Endothelial cell of umbilical vein (primary cell): ENCODE measurements at regions of chr7 and their contacts with region 1.

Region 1: DNA sequence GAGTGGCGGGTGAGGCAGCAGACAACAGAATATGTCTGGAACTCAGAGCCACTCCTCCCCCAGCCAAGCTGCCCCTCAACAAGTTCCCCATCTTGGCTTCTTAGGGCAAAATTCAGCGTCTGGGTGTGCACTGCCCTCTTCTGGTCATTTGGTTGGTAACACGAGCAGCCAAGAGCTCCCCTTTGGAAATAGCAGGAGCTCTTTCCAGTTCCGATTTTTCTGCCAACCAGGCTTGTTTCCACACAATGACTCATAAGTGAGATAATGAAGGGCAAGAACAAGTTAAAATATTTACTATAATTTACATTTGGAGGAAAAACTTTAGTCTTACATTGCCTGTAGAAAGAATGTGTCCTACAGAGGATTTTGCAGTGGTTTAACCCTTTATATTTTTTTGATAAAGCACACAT is 70.5 kb downstream of the ADCYAP1R1 start:
- DNase-seq: peak; percentile 88
- H3K4me3 ChIP-seq: no peak overlapping the region
- H3K27ac ChIP-seq: no peak overlapping the region
- H3K4me1 ChIP-seq: no peaks in the 10 kb centered on the region
- H3K27me3 ChIP-seq: peaks cover 0 to 14% of the 10 kb centered on the region in 2 experiments
- CTCF ChIP-seq: peak; percentile 81 to 85
- POLR2A ChIP-seq: no peak

Region 2: GRCh38 chr7:30740424-30741181 is 382.1 kb before region 1 on chr7:
- CTCF ChIA-PET with region 1: interaction called, 21 read pairs
- POLR2A ChIA-PET with region 1: no interaction called
- dilution Hi-C with region 1: no loop called
- intact Hi-C with region 1: loop called (anchors 5 kb)
- DNase-seq: peak; percentile 58
- H3K4me3 ChIP-seq: no peak overlapping the region
- H3K27ac ChIP-seq: no peak overlapping the region
- H3K4me1 ChIP-seq: no peaks in the 10 kb centered on the region
- H3K27me3 ChIP-seq: peaks cover 3 to 4% of the 10 kb centered on the region in 2 experiments
- CTCF ChIP-seq: peak; percentile 94 to 98
- POLR2A ChIP-seq: no peak

Region 3: GRCh38 chr7:30938435-30939316 is 184.0 kb before region 1 on chr7:
- CTCF ChIA-PET with region 1: interaction called, 48 read pairs
- POLR2A ChIA-PET with region 1: no interaction called
- dilution Hi-C with region 1: no loop called
- intact Hi-C with region 1: loop called (anchors 1 kb)
- DNase-seq: peak; percentile 78
- H3K4me3 ChIP-seq: no peak overlapping the region
- H3K27ac ChIP-seq: no peak overlapping the region
- H3K4me1 ChIP-seq: no peaks in the 10 kb centered on the region
- H3K27me3 ChIP-seq: peaks cover 14 to 45% of the 10 kb centered on the region in 2 experiments
- CTCF ChIP-seq: peak; percentile 94 to 96
- POLR2A ChIP-seq: no peak

Region 4: GRCh38 chr7:30996256-30996655 is 126.4 kb before region 1 on chr7:
- CTCF ChIA-PET with region 1: interaction called, 1,079 read pairs
- POLR2A ChIA-PET with region 1: no interaction called
- dilution Hi-C with region 1: no loop called
- intact Hi-C with region 1: no loop called
- DNase-seq: no peak
- H3K4me3 ChIP-seq: no peak overlapping the region
- H3K27ac ChIP-seq: no peak overlapping the region
- H3K4me1 ChIP-seq: no peaks in the 10 kb centered on the region
- H3K27me3 ChIP-seq: no peaks in the 10 kb centered on the region
- CTCF ChIP-seq: no peak
- POLR2A ChIP-seq: no peak

Region 5: DNA sequence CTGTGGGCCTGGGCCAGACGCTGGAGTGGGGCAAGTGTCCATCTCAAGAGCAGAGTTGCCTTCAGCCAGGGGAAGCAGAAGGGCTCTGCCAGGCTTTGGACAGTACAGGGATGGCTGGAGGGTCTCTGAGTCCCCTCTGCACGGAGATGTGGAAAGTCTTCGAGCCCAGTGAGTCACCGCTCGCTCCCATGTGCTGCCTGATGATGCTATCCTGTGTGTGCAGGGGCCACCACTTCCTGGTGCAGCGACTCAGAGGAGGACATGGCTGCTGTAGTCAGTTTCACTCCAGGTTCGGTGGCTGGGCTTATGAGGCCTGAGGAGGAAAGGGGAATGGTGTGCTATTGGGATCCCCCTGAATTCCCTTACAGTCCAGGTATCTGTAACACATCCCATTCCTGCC is 64.5 kb before region 1 on chr7:
- CTCF ChIA-PET with region 1: interaction called, 73 read pairs
- POLR2A ChIA-PET with region 1: no interaction called
- dilution Hi-C with region 1: no loop called
- intact Hi-C with region 1: loop called (anchors 1 kb)
- DNase-seq: no peak
- H3K4me3 ChIP-seq: no peak overlapping the region
- H3K27ac ChIP-seq: no peak overlapping the region
- H3K4me1 ChIP-seq: no peaks in the 10 kb centered on the region
- H3K27me3 ChIP-seq: peaks cover 11 to 13% of the 10 kb centered on the region in 2 experiments
- CTCF ChIP-seq: no peak
- POLR2A ChIP-seq: no peak

Region 6: DNA sequence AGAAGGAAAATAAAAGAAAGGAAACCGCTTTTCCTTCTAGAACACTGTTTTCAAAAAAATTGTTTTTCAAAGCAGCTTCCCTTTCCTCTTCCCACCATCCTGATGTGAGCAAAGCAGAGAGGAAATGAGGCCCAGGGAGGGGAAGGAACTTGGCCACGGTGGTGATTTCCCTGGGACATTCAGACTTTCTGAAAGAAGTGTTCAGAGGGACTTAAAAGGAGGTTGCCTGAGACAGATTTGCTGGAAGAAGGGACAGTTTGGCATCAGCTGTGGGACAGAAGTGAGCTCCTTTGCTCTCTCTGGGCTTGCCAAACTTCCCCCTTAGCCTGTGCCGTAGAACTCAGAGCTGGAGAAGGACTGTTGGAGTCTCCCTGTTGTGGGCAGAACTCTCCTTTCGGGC is 40.2 kb before region 1 on chr7:
- CTCF ChIA-PET with region 1: interaction called, 11 read pairs
- POLR2A ChIA-PET with region 1: no interaction called
- dilution Hi-C with region 1: no loop called
- intact Hi-C with region 1: no loop called
- DNase-seq: peak; percentile 28
- H3K4me3 ChIP-seq: no peak overlapping the region
- H3K27ac ChIP-seq: no peak overlapping the region
- H3K4me1 ChIP-seq: peaks cover 24% of the 10 kb centered on the region
- H3K27me3 ChIP-seq: no peaks in the 10 kb centered on the region
- CTCF ChIP-seq: no peak
- POLR2A ChIP-seq: no peak

Region 7: GRCh38 chr7:31134246-31135188 is 11.9 kb after region 1 on chr7:
- CTCF ChIA-PET with region 1: interaction called, 150 read pairs
- POLR2A ChIA-PET with region 1: no interaction called
- dilution Hi-C with region 1: no loop called
- intact Hi-C with region 1: no loop called
- DNase-seq: peak; percentile 58
- H3K4me3 ChIP-seq: no peak overlapping the region
- H3K27ac ChIP-seq: no peak overlapping the region
- H3K4me1 ChIP-seq: no peaks in the 10 kb centered on the region
- H3K27me3 ChIP-seq: no peaks in the 10 kb centered on the region
- CTCF ChIP-seq: peak; percentile 64 to 72
- POLR2A ChIP-seq: no peak